Activated B cell treated with CpG ODN at 0.5 μM for 24 hours (primary cell): ENCODE measurements at regions of chr12 and their contacts with region 1.

Region 1: GRCh38 chr12:50032639-50033581 is 7.6 kb upstream of the RACGAP1 start:
- DNase-seq: no peak
- ATAC-seq: peak; percentile 73
- H3K4me3 Mint-ChIP-seq: peak overlapping the region; percentile 78
- H3K27ac Mint-ChIP-seq: peak overlapping the region; percentile 74
- H3K4me1 Mint-ChIP-seq: peaks cover 13% of the 10 kb centered on the region
- H3K27me3 Mint-ChIP-seq: peaks cover 2% of the 10 kb centered on the region
- CTCF ChIP-seq: no peak

Region 2: DNA sequence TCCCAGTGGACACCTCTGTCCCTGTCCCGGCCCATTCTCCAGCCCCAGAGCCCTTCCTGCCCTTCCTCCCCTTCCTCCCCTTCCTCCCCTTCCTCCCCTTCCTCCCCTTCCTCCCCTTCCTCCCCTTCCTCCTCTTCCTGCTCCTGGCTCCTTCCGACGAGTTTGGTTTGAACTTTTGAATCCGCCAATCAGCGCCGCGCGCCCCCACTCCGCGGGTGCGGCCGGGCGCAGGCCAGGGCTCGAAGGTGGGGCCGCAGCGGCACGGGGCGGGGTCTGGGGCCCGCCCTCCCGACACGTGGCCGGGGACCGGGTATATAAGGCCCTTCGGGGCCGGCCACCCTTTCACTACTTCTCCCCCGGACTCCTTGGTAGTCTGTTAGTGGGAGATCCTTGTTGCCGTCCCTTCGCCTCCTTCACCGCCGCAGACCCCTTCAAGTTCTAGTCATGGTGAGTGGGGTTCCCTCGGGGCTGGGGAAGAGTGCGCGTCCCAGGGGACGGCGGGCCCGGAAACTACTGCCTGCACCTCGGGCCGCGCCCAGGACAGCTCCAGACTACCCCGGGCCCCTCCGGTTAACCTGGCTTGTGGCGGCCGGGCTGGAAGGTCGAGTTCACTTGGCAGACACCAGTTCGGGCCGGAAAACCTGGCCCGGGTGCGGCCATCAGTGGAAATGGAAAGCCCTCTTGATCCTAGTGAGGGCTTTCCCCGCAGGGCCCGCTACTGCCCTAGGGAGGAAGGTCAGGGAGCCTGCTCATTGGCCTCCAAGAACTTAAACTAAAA is 768.0 kb before region 1 on chr12 and contains the start of gene TUBA1C:
- CTCF ChIA-PET with region 1: no interaction called
- POLR2A ChIA-PET with region 1: no interaction called
- intact Hi-C with region 1: no loop called
- DNase-seq: peak; percentile 90
- ATAC-seq: peak; percentile 90
- H3K4me3 Mint-ChIP-seq: peak within 1 kb of the TSS; percentile 94
- H3K27ac Mint-ChIP-seq: peak within 1 kb of the TSS; percentile 92
- H3K4me1 Mint-ChIP-seq: peaks cover 20% of the 10 kb centered on the region
- H3K27me3 Mint-ChIP-seq: no peaks in the 10 kb centered on the region
- CTCF ChIP-seq: no peak
- total RNA-seq, gene TUBA1C: 141 and 142 TPM in 2 replicates

Region 3: DNA sequence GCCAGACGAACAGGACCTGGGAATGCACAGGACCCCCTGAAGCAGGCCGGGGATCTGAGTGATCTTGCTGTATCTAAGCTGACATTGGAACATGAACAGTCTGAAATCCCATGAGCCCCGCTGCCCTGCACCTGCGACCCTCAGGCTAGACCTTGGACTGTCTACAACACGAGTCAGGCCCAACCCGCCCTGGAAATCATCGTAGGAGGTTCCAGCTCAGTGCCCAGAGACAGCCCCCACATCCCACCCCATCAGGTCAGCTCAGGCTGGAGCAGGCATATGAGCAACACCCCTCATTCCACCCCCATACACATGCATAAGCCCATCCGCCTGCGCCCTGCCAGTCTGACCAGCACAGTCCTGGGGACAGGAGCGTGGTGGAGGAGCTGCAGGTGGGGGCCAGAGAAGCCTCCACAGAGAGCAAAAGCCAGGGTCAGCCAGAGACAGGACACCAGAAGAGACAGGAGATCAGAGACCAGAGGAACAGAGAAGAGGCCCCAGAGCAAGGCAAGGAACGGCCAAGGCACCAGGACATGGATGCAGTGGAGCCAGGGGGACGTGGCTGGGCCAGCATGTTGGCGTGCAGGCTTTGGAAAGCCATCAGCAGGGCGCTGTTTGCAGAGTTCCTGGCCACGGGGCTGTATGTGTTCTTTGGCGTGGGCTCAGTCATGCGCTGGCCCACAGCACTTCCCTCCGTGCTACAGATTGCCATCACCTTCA is 60.1 kb before region 1 on chr12 and contains the start of gene AQP6:
- CTCF ChIA-PET with region 1: no interaction called
- POLR2A ChIA-PET with region 1: interaction called, 13 read pairs
- intact Hi-C with region 1: no loop called
- DNase-seq: no peak
- ATAC-seq: no peak
- H3K4me3 Mint-ChIP-seq: no peak within 1 kb of the TSS
- H3K27ac Mint-ChIP-seq: no peak within 1 kb of the TSS
- H3K4me1 Mint-ChIP-seq: no peaks in the 10 kb centered on the region
- H3K27me3 Mint-ChIP-seq: peaks cover 10% of the 10 kb centered on the region
- CTCF ChIP-seq: no peak
- total RNA-seq, gene AQP6: not detected in 2 replicates

Region 4: GRCh38 chr12:49990273-49990672 is 42.6 kb before region 1 on chr12:
- CTCF ChIA-PET with region 1: no interaction called
- POLR2A ChIA-PET with region 1: no interaction called
- intact Hi-C with region 1: no loop called
- DNase-seq: no peak
- ATAC-seq: no peak
- H3K4me3 Mint-ChIP-seq: no peak overlapping the region
- H3K27ac Mint-ChIP-seq: no peak overlapping the region
- H3K4me1 Mint-ChIP-seq: no peaks in the 10 kb centered on the region
- H3K27me3 Mint-ChIP-seq: no peaks in the 10 kb centered on the region
- CTCF ChIP-seq: no peak

Region 5: GRCh38 chr12:50103767-50104321 is 70.9 kb after region 1 on chr12 and contains the start of gene GPD1:
- CTCF ChIA-PET with region 1: no interaction called
- POLR2A ChIA-PET with region 1: no interaction called
- intact Hi-C with region 1: no loop called
- DNase-seq: no peak
- ATAC-seq: no peak
- H3K4me3 Mint-ChIP-seq: no peak within 1 kb of the TSS
- H3K27ac Mint-ChIP-seq: no peak within 1 kb of the TSS
- H3K4me1 Mint-ChIP-seq: peaks cover 16% of the 10 kb centered on the region
- H3K27me3 Mint-ChIP-seq: no peaks in the 10 kb centered on the region
- CTCF ChIP-seq: no peak
- total RNA-seq, gene GPD1: 0.46 and 0.60 TPM in 2 replicates